HEK293 (cell line): ENCODE measurements at regions of chr6 and their contacts with region 1.

Region 1: GRCh38 chr6:151323791-151324487 is 67.4 kb downstream of the ZBTB2 start:
- H3K4me3 ChIP-seq: no peak overlapping the region
- H3K27ac ChIP-seq: no peak overlapping the region
- H3K4me1 ChIP-seq: no peaks in the 10 kb centered on the region
- CTCF ChIP-seq: peak; percentile 91

Region 2: GRCh38 chr6:150891888-150892485 is 432.0 kb before region 1 on chr6:
- CTCF ChIA-PET with region 1: interaction called, 283 read pairs
- POLR2A ChIA-PET with region 1: no interaction called
- H3K4me3 ChIP-seq: no peak overlapping the region
- H3K27ac ChIP-seq: no peak overlapping the region
- H3K4me1 ChIP-seq: peaks cover 6% of the 10 kb centered on the region; the same call in 1 of the 2 replicates
- CTCF ChIP-seq: peak; percentile 64

Region 3: GRCh38 chr6:151067684-151068596 is 256.0 kb before region 1 on chr6:
- CTCF ChIA-PET with region 1: interaction called, 14 read pairs
- POLR2A ChIA-PET with region 1: no interaction called
- H3K4me3 ChIP-seq: no peak overlapping the region
- H3K27ac ChIP-seq: peak overlapping the region; percentile 26
- H3K4me1 ChIP-seq: peaks cover 12% of the 10 kb centered on the region
- CTCF ChIP-seq: no peak

Region 4: DNA sequence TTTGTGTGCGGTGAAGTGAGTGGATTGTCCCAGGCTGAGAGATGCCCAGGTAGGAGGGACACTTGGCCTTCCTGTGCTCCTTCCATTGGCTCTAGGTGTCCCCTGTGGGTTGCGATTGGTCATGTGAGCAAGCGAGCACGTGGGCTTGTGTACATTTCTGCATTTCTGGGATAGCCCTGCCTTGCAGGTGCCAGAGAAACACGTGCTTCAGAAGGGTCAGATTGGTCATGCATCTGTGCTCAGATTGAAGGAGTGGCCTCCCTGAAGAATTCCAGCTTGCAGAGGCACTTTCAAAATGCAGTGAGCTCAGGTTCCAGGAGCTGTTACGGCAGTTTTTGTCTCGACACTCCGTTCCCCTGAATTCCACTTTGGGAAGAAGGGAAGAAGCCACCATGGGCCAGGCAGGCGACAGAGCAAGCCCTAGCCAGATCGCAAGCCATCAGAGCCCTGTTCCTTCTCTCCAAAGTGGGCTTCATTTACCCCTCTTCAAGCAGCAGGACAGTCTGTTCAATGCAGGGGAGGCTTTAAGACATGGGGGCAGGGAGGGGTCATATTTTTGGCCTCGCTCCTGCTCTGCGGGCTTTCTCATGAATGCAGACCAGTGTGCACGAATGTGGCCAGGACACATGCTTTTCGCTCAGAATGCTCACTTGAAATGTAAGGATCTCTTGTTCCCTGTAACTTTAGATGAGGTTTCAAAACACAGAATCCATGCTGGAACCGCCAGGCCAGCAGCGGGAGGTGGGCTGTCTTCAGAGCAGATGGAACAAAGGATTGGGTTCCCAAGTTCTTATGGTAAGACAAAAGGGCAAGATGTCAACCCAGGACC is 162.8 kb before region 1 on chr6:
- CTCF ChIA-PET with region 1: interaction called, 12 read pairs
- POLR2A ChIA-PET with region 1: interaction called, 4 read pairs
- H3K4me3 ChIP-seq: no peak overlapping the region
- H3K27ac ChIP-seq: no peak overlapping the region
- H3K4me1 ChIP-seq: no peaks in the 10 kb centered on the region
- CTCF ChIP-seq: no peak

Region 5: DNA sequence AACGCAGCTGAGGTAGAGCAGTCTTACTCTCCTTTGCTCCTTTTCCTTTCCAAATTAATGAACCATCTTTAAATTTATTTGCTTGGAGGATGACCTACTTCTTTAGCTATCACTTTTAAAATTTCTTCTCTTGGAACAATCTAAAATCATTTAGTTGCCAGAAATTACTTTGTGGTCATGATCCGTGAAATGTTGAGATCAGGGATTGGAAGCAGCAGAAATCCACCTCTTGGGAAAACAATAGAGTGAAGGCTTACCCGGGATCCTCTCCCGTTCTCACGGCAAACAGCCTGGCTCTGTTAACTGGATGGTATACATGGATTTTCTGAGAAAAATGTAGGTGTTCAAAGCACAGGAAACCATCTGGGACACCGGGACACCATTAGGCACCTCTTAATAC is 76.4 kb before region 1 on chr6:
- CTCF ChIA-PET with region 1: interaction called, 34 read pairs
- POLR2A ChIA-PET with region 1: no interaction called
- H3K4me3 ChIP-seq: no peak overlapping the region
- H3K27ac ChIP-seq: no peak overlapping the region
- H3K4me1 ChIP-seq: peaks cover 3% of the 10 kb centered on the region; the same call in 1 of the 2 replicates
- CTCF ChIP-seq: no peak

Region 6: DNA sequence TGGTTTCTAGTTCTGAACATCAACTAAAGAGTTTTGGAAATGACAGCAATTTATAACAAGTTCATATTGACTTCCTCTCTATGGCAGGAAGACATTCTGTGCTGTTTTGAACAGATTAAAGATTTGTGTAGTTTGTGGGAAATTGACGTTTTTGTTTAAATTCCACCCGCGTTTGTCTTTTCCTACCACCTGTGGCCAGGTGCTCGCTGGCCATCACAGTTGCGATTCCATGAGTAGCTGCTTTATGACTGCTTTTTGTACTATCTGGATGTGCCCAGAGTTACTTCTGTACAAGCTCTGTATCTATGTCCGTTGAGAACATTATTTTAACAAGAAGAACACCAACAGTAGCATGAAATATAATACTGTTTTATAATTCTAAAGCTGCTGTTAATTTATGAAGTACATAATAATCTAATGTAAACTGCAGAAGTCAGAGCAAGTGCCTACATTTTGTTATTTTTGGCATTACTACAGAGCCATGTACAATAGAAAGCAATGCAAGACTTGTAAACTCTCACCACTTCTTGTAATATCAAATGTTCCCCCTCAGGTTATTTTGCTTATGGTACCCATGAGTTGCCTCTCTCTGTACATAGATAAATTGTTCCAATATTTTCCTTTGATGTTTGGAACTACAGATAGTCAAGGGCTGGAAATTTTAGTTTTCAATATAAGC is 34.0 kb after region 1 on chr6:
- CTCF ChIA-PET with region 1: interaction called, 11 read pairs
- POLR2A ChIA-PET with region 1: no interaction called
- H3K4me3 ChIP-seq: no peak overlapping the region
- H3K27ac ChIP-seq: no peak overlapping the region
- H3K4me1 ChIP-seq: peaks cover 10% of the 10 kb centered on the region
- CTCF ChIP-seq: no peak

Region 7: DNA sequence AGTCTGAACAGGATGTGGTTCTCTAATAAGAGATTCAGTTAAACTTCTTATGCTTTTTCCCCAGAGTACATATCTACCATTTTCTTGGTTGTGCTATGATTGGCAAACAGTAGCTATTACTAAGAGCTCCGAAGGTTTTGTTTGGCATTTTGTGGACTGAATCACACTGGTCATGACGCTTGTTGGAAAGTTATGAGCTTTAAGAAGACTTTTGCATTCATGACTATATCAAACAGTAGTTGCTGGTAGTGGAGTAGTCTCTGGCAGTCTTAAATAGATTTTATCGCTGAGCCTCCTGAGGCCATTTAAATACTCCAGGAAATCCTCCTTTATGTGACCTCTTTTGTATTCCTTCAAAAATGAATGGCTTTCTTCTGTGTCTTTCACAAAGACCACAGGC is 210.6 kb after region 1 on chr6:
- CTCF ChIA-PET with region 1: no interaction called
- POLR2A ChIA-PET with region 1: no interaction called
- H3K4me3 ChIP-seq: no peak overlapping the region
- H3K27ac ChIP-seq: no peak overlapping the region
- H3K4me1 ChIP-seq: no peaks in the 10 kb centered on the region
- CTCF ChIP-seq: no peak